B cell (primary cell): ENCODE measurements at regions of chr6 and their contacts with region 1.

Region 1: DNA sequence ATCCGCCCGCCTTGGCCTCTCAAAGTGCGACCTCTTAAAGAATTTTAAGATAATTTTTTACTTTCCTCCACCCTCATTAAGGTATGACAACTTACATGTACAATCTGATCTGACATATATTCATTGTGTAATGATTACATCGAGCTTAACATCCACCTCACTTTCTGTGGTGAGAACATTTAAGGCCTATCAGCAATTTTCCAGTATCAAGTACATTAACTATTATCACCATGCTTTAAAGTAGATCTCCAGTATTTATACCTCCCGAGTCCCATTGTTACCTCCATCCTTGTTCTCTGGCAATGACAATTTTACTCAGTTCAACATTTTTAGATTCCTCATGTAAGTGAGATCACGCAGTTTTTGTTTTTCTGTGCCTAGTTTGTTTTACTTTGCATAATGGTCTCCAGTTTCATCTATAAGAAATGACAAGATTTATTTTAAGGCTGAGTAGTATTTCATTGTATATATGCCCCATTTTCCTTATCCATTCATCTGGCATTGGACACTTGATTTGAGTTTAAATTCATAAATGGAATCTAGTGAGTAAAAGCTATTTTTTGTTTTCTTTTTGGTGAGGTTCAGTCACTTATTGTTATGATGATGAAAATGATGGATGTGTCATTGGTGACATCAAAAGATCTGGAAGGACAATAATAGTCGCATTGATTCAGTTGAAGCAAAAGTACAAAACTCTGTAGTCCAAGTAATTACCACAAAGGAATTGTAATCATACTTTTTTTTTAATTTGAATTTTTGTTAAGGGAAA is 87.0 kb downstream of the OR2B2 start:
- DNase-seq: peak; percentile 41
- ATAC-seq: no peak
- H3K4me3 ChIP-seq: peak overlapping the region; percentile 66 to 95 (median 88)
- H3K4me3 Mint-ChIP-seq: peak overlapping the region; percentile 95
- H3K27ac ChIP-seq: peak overlapping the region; percentile 79 to 90
- H3K27ac Mint-ChIP-seq: peak overlapping the region; percentile 97
- H3K4me1 ChIP-seq: peaks cover 16 to 20% of the 10 kb centered on the region in 2 donors
- H3K4me1 Mint-ChIP-seq: peaks cover 35% of the 10 kb centered on the region
- H3K27me3 ChIP-seq: no peaks in the 10 kb centered on the region
- H3K27me3 Mint-ChIP-seq: no peaks in the 10 kb centered on the region
- CTCF ChIP-seq: no peak

Region 2: GRCh38 chr6:27700337-27700736 is 124.9 kb before region 1 on chr6:
- CTCF ChIA-PET with region 1: no interaction called
- POLR2A ChIA-PET with region 1: no interaction called
- intact Hi-C with region 1: no loop called
- DNase-seq: no peak
- ATAC-seq: no peak
- H3K4me3 ChIP-seq: no peak overlapping the region
- H3K4me3 Mint-ChIP-seq: no peak overlapping the region
- H3K27ac ChIP-seq: no peak overlapping the region
- H3K27ac Mint-ChIP-seq: no peak overlapping the region
- H3K4me1 ChIP-seq: no peaks in the 10 kb centered on the region
- H3K4me1 Mint-ChIP-seq: peaks cover 6% of the 10 kb centered on the region
- H3K27me3 ChIP-seq: no peaks in the 10 kb centered on the region
- H3K27me3 Mint-ChIP-seq: no peaks in the 10 kb centered on the region
- CTCF ChIP-seq: no peak

Region 3: DNA sequence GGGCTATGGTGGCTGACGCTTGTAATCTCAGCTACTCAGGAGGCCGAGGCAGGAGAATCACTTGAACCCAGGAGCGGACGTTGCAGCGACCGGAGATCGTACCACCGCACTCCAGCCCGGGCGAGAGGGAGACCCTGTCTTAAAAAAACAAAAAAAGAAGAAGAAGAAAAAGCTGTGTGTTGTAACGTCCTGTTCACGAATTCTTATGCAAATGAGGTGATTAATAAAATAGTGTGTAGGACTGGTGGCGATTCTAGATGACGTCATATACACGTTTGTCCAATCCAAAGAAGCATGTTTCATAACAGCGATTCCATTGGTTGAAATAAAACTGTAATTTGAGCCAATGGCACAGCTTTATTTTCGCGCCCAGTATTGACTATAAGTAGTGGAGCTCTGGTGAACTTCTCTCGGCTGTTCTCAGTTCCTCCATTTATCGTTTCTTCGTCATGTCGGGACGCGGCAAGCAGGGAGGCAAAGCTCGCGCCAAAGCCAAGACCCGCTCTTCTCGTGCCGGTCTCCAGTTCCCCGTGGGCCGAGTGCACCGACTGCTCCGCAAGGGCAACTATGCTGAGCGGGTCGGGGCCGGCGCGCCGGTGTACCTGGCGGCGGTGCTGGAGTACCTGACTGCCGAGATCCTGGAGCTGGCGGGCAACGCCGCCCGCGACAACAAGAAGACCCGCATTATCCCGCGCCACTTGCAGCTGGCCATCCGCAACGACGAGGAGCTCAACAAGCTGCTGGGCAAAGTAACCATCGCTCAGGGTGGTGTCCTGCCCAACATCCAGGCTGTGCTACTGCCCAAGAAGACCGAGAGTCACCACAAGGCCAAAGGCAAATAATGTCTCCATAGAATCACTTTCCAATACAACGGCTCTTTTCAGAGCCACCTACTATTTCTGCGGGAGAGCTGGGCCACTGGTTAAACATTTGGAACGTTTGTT is 40.0 kb after region 1 on chr6:
- CTCF ChIA-PET with region 1: interaction called, 8 read pairs
- POLR2A ChIA-PET with region 1: interaction called, 26 read pairs
- intact Hi-C with region 1: no loop called
- DNase-seq: peak; percentile 97
- ATAC-seq: peak; percentile 80
- H3K4me3 ChIP-seq: peak overlapping the region; percentile 60 to 82 (median 69)
- H3K4me3 Mint-ChIP-seq: peak overlapping the region; percentile 97
- H3K27ac ChIP-seq: peak overlapping the region; percentile 81 to 83
- H3K27ac Mint-ChIP-seq: peak overlapping the region; percentile 97
- H3K4me1 ChIP-seq: peaks cover 13 to 35% of the 10 kb centered on the region in 2 donors
- H3K4me1 Mint-ChIP-seq: peaks cover 45% of the 10 kb centered on the region
- H3K27me3 ChIP-seq: no peaks in the 10 kb centered on the region
- H3K27me3 Mint-ChIP-seq: no peaks in the 10 kb centered on the region
- CTCF ChIP-seq: no peak

Region 4: GRCh38 chr6:27871924-27872638 is 46.9 kb after region 1 on chr6:
- CTCF ChIA-PET with region 1: interaction called, 10 read pairs
- POLR2A ChIA-PET with region 1: interaction called, 26 read pairs
- intact Hi-C with region 1: no loop called
- DNase-seq: peak; percentile 98
- ATAC-seq: peak; percentile 76
- H3K4me3 ChIP-seq: peak overlapping the region; percentile 66 to 99 (median 76)
- H3K4me3 Mint-ChIP-seq: peak overlapping the region; percentile 84
- H3K27ac ChIP-seq: peak overlapping the region; percentile 79 to 88
- H3K27ac Mint-ChIP-seq: peak overlapping the region; percentile 98
- H3K4me1 ChIP-seq: peaks cover 20 to 34% of the 10 kb centered on the region in 2 donors
- H3K4me1 Mint-ChIP-seq: peaks cover 30% of the 10 kb centered on the region
- H3K27me3 ChIP-seq: no peaks in the 10 kb centered on the region
- H3K27me3 Mint-ChIP-seq: no peaks in the 10 kb centered on the region
- CTCF ChIP-seq: peak; percentile 56

Region 5: DNA sequence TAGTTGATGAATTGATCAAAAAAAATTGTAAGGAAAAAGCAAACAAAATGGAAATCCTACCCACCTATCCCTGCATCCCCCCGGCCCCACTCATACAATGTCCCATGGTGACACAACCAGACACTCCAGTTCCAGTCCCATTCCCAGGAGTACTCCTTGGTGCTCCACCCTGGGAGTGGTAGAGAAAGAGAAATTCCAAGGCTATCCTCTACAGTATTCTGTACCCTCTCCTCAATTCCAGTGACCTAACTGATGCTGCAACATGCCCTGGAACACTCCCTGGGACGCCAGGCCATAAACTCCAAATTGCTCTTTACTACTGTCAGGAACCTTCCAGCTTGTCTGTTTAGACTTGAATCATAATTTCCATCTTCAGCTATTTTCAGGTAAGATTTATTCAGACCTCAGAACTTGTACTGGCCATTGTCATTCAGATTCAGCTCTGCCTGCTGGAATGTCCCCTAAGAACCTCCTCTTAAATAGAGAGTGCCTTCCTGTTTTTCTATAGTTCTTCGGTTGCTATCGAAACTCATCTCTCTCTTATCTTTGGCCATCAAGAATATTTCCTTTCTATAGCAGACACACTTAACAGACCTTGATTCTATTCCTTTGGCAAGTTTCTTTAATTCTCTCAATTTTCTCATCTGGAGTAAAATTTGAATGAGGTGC is 681.7 kb after region 1 on chr6:
- CTCF ChIA-PET with region 1: no interaction called
- POLR2A ChIA-PET with region 1: no interaction called
- intact Hi-C with region 1: no loop called
- DNase-seq: no peak
- ATAC-seq: no peak
- H3K4me3 ChIP-seq: no peak overlapping the region
- H3K4me3 Mint-ChIP-seq: no peak overlapping the region
- H3K27ac ChIP-seq: no peak overlapping the region
- H3K27ac Mint-ChIP-seq: no peak overlapping the region
- H3K4me1 ChIP-seq: no peaks in the 10 kb centered on the region
- H3K4me1 Mint-ChIP-seq: no peaks in the 10 kb centered on the region
- H3K27me3 ChIP-seq: peaks cover 0 to 15% (median 3%) of the 10 kb centered on the region in 4 experiments
- H3K27me3 Mint-ChIP-seq: peaks cover 25% of the 10 kb centered on the region
- CTCF ChIP-seq: no peak